MCF 10A (cell line): ENCODE measurements at regions of chr6 and their contacts with region 1.

Region 1: GRCh38 chr6:109187399-109188114 is 92.2 kb downstream of the CEP57L1 start:
- DNase-seq: peak; percentile 68
- H3K4me3 Mint-ChIP-seq: no peak overlapping the region
- H3K27ac Mint-ChIP-seq: no peak overlapping the region
- H3K4me1 Mint-ChIP-seq: peaks cover 1% of the 10 kb centered on the region
- H3K27me3 Mint-ChIP-seq: peaks cover 50% of the 10 kb centered on the region
- CTCF ChIP-seq: peak; percentile 92

Region 2: DNA sequence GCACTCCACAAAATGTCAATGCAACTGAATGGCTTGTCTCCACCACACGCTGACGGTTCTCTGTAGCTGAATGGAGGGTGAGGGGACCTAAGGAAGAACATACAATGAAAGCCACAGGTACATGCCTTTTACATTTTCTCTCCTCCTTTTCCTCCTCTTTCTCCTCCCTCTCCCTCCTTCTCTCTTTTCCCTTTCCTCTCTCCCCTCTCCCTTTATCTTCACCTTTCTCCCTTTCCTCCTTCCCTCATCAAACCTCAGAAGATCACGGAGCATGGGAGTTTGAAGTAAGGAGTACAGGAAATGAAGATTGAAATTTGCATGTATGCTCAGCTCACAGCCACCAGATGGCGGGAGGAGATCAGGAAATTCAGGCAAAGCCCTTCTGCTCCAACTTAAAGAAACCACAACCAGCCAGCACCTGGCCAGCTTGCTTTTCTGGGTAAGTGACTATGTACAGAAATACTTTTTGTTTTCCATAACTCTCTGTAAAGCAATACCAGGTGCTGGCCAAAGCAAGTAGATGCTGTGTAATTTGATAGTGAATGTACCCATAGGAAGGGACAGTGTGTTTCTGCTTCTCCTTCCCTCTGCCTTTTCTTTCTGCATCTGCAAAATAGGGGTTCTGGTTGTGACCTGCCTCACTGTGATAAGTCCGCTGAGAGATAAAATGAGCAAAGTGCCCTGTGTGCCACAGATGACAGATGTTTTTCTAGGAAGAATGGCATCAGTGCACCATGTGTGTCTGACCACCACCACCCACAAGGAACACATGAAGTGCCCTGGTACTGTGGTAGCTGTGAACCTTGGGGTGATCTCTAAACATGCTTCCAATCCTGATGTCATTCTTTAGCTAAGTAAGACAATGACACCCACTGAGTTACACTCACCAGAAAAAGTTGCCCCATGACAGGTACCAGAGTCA is 645.5 kb before region 1 on chr6:
- CTCF ChIA-PET with region 1: interaction called, 4 read pairs
- POLR2A ChIA-PET with region 1: no interaction called
- intact Hi-C with region 1: loop called (anchors 10 kb)
- DNase-seq: peak; percentile 81
- H3K4me3 Mint-ChIP-seq: no peak overlapping the region
- H3K27ac Mint-ChIP-seq: no peak overlapping the region
- H3K4me1 Mint-ChIP-seq: peaks cover 6% of the 10 kb centered on the region
- H3K27me3 Mint-ChIP-seq: no peaks in the 10 kb centered on the region
- CTCF ChIP-seq: peak; percentile 88

Region 3: GRCh38 chr6:109202409-109203284 is 15.1 kb after region 1 on chr6:
- CTCF ChIA-PET with region 1: interaction called, 19 read pairs
- POLR2A ChIA-PET with region 1: interaction called, 3 read pairs
- intact Hi-C with region 1: no loop called
- DNase-seq: no peak
- H3K4me3 Mint-ChIP-seq: no peak overlapping the region
- H3K27ac Mint-ChIP-seq: no peak overlapping the region
- H3K4me1 Mint-ChIP-seq: no peaks in the 10 kb centered on the region
- H3K27me3 Mint-ChIP-seq: no peaks in the 10 kb centered on the region
- CTCF ChIP-seq: no peak

Region 4: DNA sequence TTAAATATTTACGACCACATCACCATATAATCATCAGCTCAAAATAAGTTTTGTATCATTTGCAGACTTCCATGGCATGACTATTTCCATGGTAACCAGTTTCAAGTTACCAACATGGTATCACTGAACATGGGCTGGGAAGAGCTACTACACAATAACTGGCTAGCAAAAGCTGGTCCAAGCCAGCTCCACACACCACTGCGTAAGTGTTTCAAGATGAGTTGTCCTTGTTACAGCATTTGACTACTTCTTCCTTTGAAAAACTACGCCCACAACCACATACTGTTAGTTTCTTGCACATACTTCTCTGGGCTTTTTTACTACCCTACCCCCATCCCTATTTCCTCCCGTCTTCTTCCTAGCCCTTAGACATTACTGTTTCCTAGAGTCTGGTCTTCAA is 186.2 kb after region 1 on chr6:
- CTCF ChIA-PET with region 1: interaction called, 19 read pairs
- POLR2A ChIA-PET with region 1: no interaction called
- intact Hi-C with region 1: no loop called
- DNase-seq: no peak
- H3K4me3 Mint-ChIP-seq: no peak overlapping the region
- H3K27ac Mint-ChIP-seq: peak overlapping the region; percentile 77
- H3K4me1 Mint-ChIP-seq: peaks cover 31% of the 10 kb centered on the region
- H3K27me3 Mint-ChIP-seq: no peaks in the 10 kb centered on the region
- CTCF ChIP-seq: no peak

Region 5: GRCh38 chr6:109397020-109397419 is 209.5 kb after region 1 on chr6:
- CTCF ChIA-PET with region 1: interaction called, 50 read pairs
- POLR2A ChIA-PET with region 1: interaction called, 6 read pairs
- intact Hi-C with region 1: loop called (anchors 1 kb)
- DNase-seq: peak; percentile 35
- H3K4me3 Mint-ChIP-seq: no peak overlapping the region
- H3K27ac Mint-ChIP-seq: no peak overlapping the region
- H3K4me1 Mint-ChIP-seq: peaks cover 12% of the 10 kb centered on the region
- H3K27me3 Mint-ChIP-seq: no peaks in the 10 kb centered on the region
- CTCF ChIP-seq: peak; percentile 18

Region 6: DNA sequence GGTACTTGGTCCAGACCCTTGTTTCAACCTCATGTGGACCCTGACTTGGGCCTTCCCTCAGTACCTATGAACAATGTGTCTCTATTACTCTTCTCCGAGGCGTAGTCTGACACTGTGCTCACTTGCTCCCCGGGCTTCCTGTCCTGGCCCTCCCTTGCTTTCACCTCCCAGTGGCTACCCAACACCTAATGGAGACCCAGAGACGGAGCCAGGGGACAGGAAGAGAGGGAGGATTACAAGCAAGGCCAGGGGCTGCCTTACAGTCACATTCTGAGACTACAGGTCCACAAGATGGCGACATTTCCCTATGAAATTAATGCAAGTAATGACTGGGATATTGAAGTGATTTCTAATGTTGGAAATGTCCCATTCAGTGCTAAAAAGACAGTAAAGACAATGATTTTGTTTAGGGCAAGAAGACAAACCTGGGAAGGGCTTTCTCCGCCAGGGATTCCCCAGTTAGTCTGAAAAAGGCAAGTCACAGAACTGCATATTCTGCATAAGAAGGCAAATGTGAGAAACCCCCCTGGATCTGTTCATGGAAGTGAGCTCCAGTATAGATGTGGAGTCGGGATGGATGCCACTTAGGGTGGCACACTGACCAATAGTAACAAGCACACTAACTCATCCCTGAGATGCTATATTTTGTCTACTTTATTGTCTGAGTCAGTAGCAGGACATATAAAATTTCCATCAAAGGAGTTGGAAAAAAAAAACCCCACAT is 339.5 kb after region 1 on chr6:
- CTCF ChIA-PET with region 1: interaction called, 4 read pairs
- POLR2A ChIA-PET with region 1: no interaction called
- intact Hi-C with region 1: loop called (anchors 5 kb)
- DNase-seq: peak; percentile 80
- H3K4me3 Mint-ChIP-seq: no peak overlapping the region
- H3K27ac Mint-ChIP-seq: no peak overlapping the region
- H3K4me1 Mint-ChIP-seq: peaks cover 6% of the 10 kb centered on the region
- H3K27me3 Mint-ChIP-seq: peaks cover 2% of the 10 kb centered on the region
- CTCF ChIP-seq: peak; percentile 70

Region 7: GRCh38 chr6:110265273-110265672 is 1077.7 kb after region 1 on chr6:
- CTCF ChIA-PET with region 1: no interaction called
- POLR2A ChIA-PET with region 1: no interaction called
- intact Hi-C with region 1: no loop called
- DNase-seq: no peak
- H3K4me3 Mint-ChIP-seq: no peak overlapping the region
- H3K27ac Mint-ChIP-seq: no peak overlapping the region
- H3K4me1 Mint-ChIP-seq: no peaks in the 10 kb centered on the region
- H3K27me3 Mint-ChIP-seq: peaks cover 10% of the 10 kb centered on the region
- CTCF ChIP-seq: no peak